Endothelial cell of umbilical vein (primary cell): ENCODE measurements at regions of chr6 and their contacts with region 1.

Region 1: GRCh38 chr6:12528581-12529363 is 187.8 kb upstream of the PHACTR1 start:
- DNase-seq: peak; percentile 89
- H3K4me3 ChIP-seq: no peak overlapping the region
- H3K27ac ChIP-seq: peak overlapping the region; percentile 73
- H3K4me1 ChIP-seq: peaks cover 24% of the 10 kb centered on the region
- H3K27me3 ChIP-seq: no peaks in the 10 kb centered on the region
- CTCF ChIP-seq: no peak
- POLR2A ChIP-seq: peak; percentile 23

Region 2: DNA sequence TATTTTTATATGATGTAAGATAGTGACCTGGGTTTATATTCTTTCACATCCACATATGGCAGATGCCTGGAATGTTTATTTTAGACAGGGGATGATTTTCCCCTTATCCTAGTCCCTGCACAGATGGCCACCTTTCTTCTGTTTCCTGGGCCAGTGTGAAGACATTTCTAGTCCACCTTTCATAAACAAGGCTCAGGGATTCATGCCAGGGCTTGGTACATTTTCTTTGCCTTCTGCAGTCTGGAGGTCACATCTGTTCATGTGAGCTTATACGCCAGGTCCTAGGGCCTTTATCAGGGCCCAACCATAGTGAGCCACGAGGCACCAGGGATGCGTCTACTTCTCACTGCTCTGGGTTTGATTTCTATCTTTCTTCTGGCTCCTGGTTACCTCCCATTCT is 1379.2 kb before region 1 on chr6:
- CTCF ChIA-PET with region 1: no interaction called
- POLR2A ChIA-PET with region 1: no interaction called
- dilution Hi-C with region 1: no loop called
- intact Hi-C with region 1: no loop called
- DNase-seq: no peak
- H3K4me3 ChIP-seq: no peak overlapping the region
- H3K27ac ChIP-seq: no peak overlapping the region
- H3K4me1 ChIP-seq: no peaks in the 10 kb centered on the region
- H3K27me3 ChIP-seq: no peaks in the 10 kb centered on the region
- CTCF ChIP-seq: no peak
- POLR2A ChIP-seq: no peak

Region 3: GRCh38 chr6:12490904-12491571 is 37.7 kb before region 1 on chr6:
- CTCF ChIA-PET with region 1: interaction called, 4 read pairs
- POLR2A ChIA-PET with region 1: no interaction called
- dilution Hi-C with region 1: no loop called
- intact Hi-C with region 1: loop called (anchors 2 kb)
- DNase-seq: peak; percentile 96
- H3K4me3 ChIP-seq: no peak overlapping the region
- H3K27ac ChIP-seq: peak overlapping the region; percentile 93
- H3K4me1 ChIP-seq: peaks cover 39% of the 10 kb centered on the region
- H3K27me3 ChIP-seq: no peaks in the 10 kb centered on the region
- CTCF ChIP-seq: no peak
- POLR2A ChIP-seq: no peak

Region 4: GRCh38 chr6:12882761-12883290 is 354.1 kb after region 1 on chr6:
- CTCF ChIA-PET with region 1: no interaction called
- POLR2A ChIA-PET with region 1: no interaction called
- dilution Hi-C with region 1: no loop called
- intact Hi-C with region 1: no loop called
- DNase-seq: no peak
- H3K4me3 ChIP-seq: no peak overlapping the region
- H3K27ac ChIP-seq: no peak overlapping the region
- H3K4me1 ChIP-seq: no peaks in the 10 kb centered on the region
- H3K27me3 ChIP-seq: peaks cover 2 to 8% of the 10 kb centered on the region in 2 experiments
- CTCF ChIP-seq: no peak
- POLR2A ChIP-seq: no peak